CD8-positive, alpha-beta memory T cell (primary cell): ENCODE measurements at regions of chr9 and their contacts with region 1.

Region 1: DNA sequence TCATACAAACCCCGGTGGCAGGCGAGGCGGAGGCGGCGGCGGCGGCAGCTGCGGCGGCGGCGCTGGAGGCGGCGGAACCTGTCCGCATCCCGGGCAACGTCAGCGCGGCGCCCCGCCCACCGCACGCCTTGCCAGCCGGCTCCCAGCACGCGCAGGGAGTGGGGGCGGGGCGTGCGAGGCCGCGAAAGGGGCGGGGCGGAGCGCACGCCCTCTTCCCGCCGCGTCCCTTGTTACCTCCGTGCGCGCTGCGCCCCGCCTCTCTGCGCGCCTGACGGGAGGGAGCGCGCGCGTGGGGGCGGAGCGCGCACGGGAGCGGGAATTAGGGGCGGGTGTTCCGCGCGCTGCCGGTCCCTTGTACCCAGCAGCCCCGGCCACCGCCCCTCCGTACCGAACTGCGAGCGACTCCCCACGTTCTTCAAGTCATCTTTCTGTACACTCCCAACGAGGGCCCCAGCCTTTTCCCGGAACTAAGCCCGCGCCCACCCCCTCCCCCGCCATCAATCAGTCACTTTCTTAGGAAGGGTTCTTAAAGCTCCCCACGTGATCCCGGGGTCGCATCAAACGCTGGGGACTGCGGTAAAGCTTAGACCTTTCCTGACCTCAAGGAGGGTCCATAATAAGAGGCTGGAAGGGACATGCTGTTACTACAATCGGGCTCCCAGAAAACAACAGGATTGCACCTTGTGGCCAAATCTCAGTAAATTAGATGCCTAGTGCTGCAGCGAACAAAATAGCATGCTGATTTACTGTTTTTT is at the start of gene AGTPBP1:
- DNase-seq: peak; percentile 97 to 98 (median 97)
- H3K4me3 ChIP-seq: peak within 1 kb of the TSS; percentile 89
- H3K4me3 Mint-ChIP-seq: peak within 1 kb of the TSS; percentile 93 to 97 (median 96)
- H3K27ac ChIP-seq: peak within 1 kb of the TSS; percentile 93
- H3K27ac Mint-ChIP-seq: peak within 1 kb of the TSS; percentile 95 to 99 (median 98)
- H3K4me1 ChIP-seq: peaks cover 18% of the 10 kb centered on the region
- H3K4me1 Mint-ChIP-seq: peaks cover 33 to 58% (median 55%) of the 10 kb centered on the region in 3 donors
- H3K27me3 ChIP-seq: no peaks in the 10 kb centered on the region
- H3K27me3 Mint-ChIP-seq: no peaks in the 10 kb centered on the region
- total RNA-seq, gene AGTPBP1: 27.5 to 30.2 TPM

Region 2: GRCh38 chr9:85723215-85723614 is 18.8 kb before region 1 on chr9:
- CTCF ChIA-PET with region 1: interaction called, 18 read pairs
- POLR2A ChIA-PET with region 1: interaction called, 24 read pairs
- DNase-seq: peak; percentile 41 to 86 (median 65)
- H3K4me3 ChIP-seq: peak overlapping the region; percentile 34
- H3K4me3 Mint-ChIP-seq: peak overlapping the region; percentile 64 to 84 (median 74)
- H3K27ac ChIP-seq: no peak overlapping the region
- H3K27ac Mint-ChIP-seq: peak overlapping the region; percentile 48 to 96 (median 90)
- H3K4me1 ChIP-seq: peaks cover 41% of the 10 kb centered on the region
- H3K4me1 Mint-ChIP-seq: peaks cover 72 to 92% (median 89%) of the 10 kb centered on the region in 3 donors
- H3K27me3 ChIP-seq: no peaks in the 10 kb centered on the region
- H3K27me3 Mint-ChIP-seq: no peaks in the 10 kb centered on the region

Region 3: DNA sequence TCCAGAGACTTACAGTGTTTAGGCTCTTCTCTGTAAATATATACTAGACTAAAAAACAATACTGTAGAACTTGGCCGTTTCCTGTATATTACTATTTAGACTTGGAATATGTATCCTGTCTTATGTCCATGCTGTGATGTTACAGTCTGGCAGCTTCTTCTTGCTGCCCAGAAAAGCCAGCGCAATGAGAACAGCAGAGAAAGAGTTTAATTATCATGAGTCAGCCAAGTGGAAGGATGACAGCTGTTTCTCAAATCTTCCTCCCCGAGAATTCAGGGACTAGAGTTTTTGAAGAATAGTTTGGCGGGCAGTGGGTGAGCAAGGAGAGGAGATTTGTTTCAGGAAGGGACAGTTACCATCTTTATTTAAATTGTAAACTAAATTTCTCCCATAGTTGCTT is 236.4 kb after region 1 on chr9:
- CTCF ChIA-PET with region 1: no interaction called
- POLR2A ChIA-PET with region 1: no interaction called
- DNase-seq: no peak
- H3K4me3 ChIP-seq: no peak overlapping the region
- H3K4me3 Mint-ChIP-seq: no peak overlapping the region
- H3K27ac ChIP-seq: no peak overlapping the region
- H3K27ac Mint-ChIP-seq: no peak overlapping the region
- H3K4me1 ChIP-seq: no peaks in the 10 kb centered on the region
- H3K4me1 Mint-ChIP-seq: peaks cover 0 to 12% (median 2%) of the 10 kb centered on the region in 3 donors
- H3K27me3 ChIP-seq: no peaks in the 10 kb centered on the region
- H3K27me3 Mint-ChIP-seq: no peaks in the 10 kb centered on the region